ENCODE measurements at regions of chr17 and their contacts with region 1.

Region 1: DNA sequence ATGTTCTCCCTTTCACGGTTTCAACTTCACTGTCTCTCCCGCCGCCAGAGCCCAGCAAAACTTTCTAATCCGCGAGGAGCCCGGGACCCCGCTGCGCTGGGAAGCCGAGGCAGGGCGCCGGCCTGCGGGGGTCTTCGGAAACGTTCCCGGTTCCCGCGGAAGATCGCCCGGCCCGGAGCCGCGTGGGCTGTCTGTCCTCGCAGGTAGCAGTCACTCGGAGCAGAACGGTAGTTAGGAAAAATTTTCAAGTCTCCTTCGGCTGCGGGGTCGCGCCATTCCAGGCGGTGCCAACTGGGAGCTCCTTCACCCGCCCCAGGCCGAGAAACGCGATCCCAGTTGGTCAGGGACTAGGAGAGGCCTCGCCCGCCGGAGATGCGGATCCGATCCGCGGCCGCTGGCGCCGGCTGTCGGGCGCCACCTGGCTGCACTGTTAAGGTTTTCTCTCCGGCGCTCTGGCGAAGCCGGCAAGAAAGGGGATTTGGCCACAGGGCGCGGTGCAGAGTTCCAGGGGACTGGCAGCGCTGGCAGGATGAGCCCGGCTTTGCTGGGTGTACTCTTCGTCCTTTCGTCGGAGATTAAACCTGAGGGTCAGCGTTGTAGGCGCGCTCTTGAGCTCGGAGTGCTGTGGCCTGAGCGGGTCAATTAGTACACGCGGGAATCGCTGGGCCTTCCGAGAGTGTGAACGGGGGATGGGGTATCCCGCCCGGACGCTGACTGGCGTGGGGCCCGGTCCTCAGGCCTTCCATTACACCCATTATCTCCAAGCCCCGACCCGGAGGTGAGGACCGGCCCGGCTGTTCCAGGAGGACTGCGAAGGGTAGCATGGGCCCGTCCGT is 135.4 kb downstream of the KCNJ12 start:
- DNase-seq: peak; percentile 67 to 85
- H3K4me3 ChIP-seq: peak overlapping the region; percentile 40 to 69 (median 53)
- H3K27ac ChIP-seq: no peak overlapping the region
- H3K4me1 ChIP-seq: peaks cover 0 to 6% (median 2%) of the 10 kb centered on the region in 4 experiments; a peak in 3 of 7 replicates
- H3K27me3 ChIP-seq: peaks cover 2 to 20% (median 11%) of the 10 kb centered on the region in 4 experiments
- CTCF ChIP-seq: peak; percentile 55 to 88 (median 68)
- EP300 ChIP-seq: no peak
- POLR2A ChIP-seq: no peak
- RAD21 ChIP-seq: peak; percentile 72 to 82

Region 2: GRCh38 chr17:21275579-21276263 is 235.9 kb before region 1 on chr17:
- CTCF ChIA-PET with region 1: interaction called, 10 read pairs
- POLR2A ChIA-PET with region 1: no interaction called
- DNase-seq: peak in 1 of 2 experiments; percentile 98
- H3K4me3 ChIP-seq: peak overlapping the region; percentile 33 to 68 (median 44)
- H3K27ac ChIP-seq: no peak overlapping the region
- H3K4me1 ChIP-seq: peaks cover 0 to 4% (median 0%) of the 10 kb centered on the region in 4 experiments; a peak in 3 of 7 replicates
- H3K27me3 ChIP-seq: peaks cover 3 to 27% (median 15%) of the 10 kb centered on the region in 4 experiments
- CTCF ChIP-seq: peak in 1 of 3 experiments; percentile 3; a peak in 1 of 4 replicates
- EP300 ChIP-seq: no peak
- POLR2A ChIP-seq: no peak
- RAD21 ChIP-seq: peak in 1 of 2 experiments; percentile 22; a peak in 2 of 4 replicates

Region 3: DNA sequence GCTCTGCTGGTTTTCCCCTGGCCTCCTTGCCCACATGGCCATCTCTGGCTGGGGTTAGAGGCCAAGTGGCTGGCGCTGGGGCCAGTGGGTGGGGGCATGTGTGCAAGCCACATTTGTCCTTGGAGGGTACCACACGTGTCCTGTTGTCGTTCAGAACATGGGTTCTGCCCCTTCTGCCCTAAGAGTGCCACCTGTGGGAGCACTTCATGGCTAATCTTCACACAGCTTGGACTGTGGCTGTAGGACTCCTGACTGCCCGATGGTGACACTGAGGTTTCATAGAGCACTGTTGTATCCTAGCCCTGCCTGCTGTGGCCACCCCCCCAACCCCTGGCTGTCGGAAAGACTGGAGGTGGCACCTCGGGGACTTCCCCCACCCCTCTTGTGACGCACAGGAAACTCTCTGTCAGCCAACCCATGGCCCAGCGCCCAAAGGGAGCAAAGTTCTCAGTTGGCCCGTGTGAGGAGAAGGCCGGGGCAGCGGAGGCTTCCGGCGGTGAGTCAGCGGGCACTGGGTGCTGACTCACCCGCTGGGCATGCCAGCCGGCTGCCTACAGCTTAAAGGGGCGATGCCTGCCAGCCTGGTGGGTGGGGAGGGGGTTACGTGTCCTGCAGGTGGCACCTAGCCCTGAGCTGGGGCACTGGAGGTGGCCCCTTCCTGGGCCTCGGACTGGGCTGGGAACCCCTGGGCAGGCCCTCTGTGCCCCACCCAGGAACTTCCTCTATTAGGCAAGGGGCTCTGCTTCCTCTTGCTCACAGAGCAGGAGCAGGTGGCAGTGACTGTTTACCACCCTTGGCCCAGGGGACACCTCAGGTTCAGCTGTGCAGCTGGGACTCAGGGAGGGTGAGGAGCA is 223.8 kb before region 1 on chr17:
- CTCF ChIA-PET with region 1: interaction called, 17 read pairs
- POLR2A ChIA-PET with region 1: no interaction called
- DNase-seq: no peak
- H3K4me3 ChIP-seq: no peak overlapping the region
- H3K27ac ChIP-seq: no peak overlapping the region
- H3K4me1 ChIP-seq: peaks cover 0 to 19% (median 9%) of the 10 kb centered on the region in 4 experiments; a peak in 6 of 7 replicates
- H3K27me3 ChIP-seq: peaks cover 5 to 13% (median 12%) of the 10 kb centered on the region in 4 experiments
- CTCF ChIP-seq: no peak
- EP300 ChIP-seq: no peak
- POLR2A ChIP-seq: no peak
- RAD21 ChIP-seq: no peak

Region 4: GRCh38 chr17:21418471-21419298 is 92.9 kb before region 1 on chr17:
- CTCF ChIA-PET with region 1: interaction called, 13 read pairs
- POLR2A ChIA-PET with region 1: no interaction called
- DNase-seq: no peak
- H3K4me3 ChIP-seq: no peak overlapping the region
- H3K27ac ChIP-seq: no peak overlapping the region
- H3K4me1 ChIP-seq: no peaks in the 10 kb centered on the region; a peak in 1 of 7 replicates
- H3K27me3 ChIP-seq: no peaks in the 10 kb centered on the region
- CTCF ChIP-seq: no peak
- EP300 ChIP-seq: no peak
- POLR2A ChIP-seq: no peak
- RAD21 ChIP-seq: no peak

Region 5: GRCh38 chr17:21457051-21458026 is 54.2 kb before region 1 on chr17:
- CTCF ChIA-PET with region 1: interaction called, 62 read pairs
- POLR2A ChIA-PET with region 1: no interaction called
- DNase-seq: peak; percentile 58 to 99
- H3K4me3 ChIP-seq: peak overlapping the region in 3 of 4 experiments; percentile 12 to 43 (median 19); a peak in 5 of 8 replicates
- H3K27ac ChIP-seq: no peak overlapping the region
- H3K4me1 ChIP-seq: peaks cover 4 to 11% (median 7%) of the 10 kb centered on the region in 4 experiments
- H3K27me3 ChIP-seq: peaks cover 0 to 16% (median 11%) of the 10 kb centered on the region in 4 experiments; a peak in 6 of 7 replicates
- CTCF ChIP-seq: peak; percentile 70 to 87 (median 83)
- EP300 ChIP-seq: no peak
- POLR2A ChIP-seq: no peak
- RAD21 ChIP-seq: peak; percentile 60 to 76

Region 6: DNA sequence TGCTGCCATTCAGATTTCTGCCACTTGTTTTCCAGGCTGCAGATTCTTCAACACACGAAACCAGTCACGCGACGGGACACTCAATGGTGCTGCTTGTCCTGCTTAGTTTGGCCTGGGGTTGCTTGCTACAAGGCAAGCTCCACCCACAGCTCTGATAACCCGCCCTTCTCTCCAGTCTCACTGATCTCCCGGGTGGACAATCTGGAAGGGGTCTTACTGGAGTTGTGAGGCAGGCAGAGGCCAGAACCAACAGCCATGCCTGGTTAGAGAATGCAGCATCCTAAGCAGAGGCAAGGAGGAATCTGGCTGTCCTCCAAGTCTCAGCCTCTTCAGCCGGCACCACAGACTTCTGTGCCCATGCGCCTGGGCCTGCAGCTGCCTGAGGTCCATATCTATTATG is 16.3 kb before region 1 on chr17:
- CTCF ChIA-PET with region 1: interaction called, 15 read pairs
- POLR2A ChIA-PET with region 1: no interaction called
- DNase-seq: no peak
- H3K4me3 ChIP-seq: no peak overlapping the region
- H3K27ac ChIP-seq: no peak overlapping the region
- H3K4me1 ChIP-seq: peaks cover 0 to 2% (median 0%) of the 10 kb centered on the region in 4 experiments; a peak in 2 of 7 replicates
- H3K27me3 ChIP-seq: no peaks in the 10 kb centered on the region
- CTCF ChIP-seq: no peak
- EP300 ChIP-seq: no peak
- POLR2A ChIP-seq: no peak
- RAD21 ChIP-seq: no peak

Region 7: DNA sequence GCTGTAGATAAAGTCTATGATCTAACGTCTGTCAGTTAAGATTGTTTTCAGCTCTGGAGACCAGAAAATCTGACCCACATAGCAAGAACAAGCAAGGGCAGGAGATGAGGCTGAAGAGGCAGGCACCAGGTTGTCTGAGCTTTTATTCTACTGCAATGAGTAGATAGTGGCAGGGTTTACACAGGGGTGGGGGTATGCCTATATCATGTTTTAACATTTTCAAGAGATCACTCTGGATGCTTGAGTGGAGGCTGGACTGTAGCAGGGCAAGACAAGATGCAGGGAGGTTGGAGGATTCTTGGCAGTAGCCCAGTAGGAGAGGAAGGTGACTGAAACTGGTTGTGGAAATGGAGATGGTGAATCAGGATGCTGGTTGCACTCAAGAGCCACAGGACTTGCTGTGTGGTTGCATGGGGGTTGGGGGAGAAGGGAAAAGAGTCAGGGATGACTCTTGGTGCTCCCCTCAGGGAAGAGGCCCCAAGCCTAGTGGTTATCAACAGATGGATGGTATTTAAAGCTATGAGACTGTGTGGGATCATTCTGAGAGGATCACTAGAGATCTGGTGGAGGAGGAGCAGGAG is 37.6 kb after region 1 on chr17:
- CTCF ChIA-PET with region 1: no interaction called
- POLR2A ChIA-PET with region 1: no interaction called
- DNase-seq: no peak
- H3K4me3 ChIP-seq: no peak overlapping the region
- H3K27ac ChIP-seq: no peak overlapping the region
- H3K4me1 ChIP-seq: no peaks in the 10 kb centered on the region
- H3K27me3 ChIP-seq: no peaks in the 10 kb centered on the region
- CTCF ChIP-seq: no peak
- EP300 ChIP-seq: no peak
- POLR2A ChIP-seq: no peak
- RAD21 ChIP-seq: no peak

Region 8: DNA sequence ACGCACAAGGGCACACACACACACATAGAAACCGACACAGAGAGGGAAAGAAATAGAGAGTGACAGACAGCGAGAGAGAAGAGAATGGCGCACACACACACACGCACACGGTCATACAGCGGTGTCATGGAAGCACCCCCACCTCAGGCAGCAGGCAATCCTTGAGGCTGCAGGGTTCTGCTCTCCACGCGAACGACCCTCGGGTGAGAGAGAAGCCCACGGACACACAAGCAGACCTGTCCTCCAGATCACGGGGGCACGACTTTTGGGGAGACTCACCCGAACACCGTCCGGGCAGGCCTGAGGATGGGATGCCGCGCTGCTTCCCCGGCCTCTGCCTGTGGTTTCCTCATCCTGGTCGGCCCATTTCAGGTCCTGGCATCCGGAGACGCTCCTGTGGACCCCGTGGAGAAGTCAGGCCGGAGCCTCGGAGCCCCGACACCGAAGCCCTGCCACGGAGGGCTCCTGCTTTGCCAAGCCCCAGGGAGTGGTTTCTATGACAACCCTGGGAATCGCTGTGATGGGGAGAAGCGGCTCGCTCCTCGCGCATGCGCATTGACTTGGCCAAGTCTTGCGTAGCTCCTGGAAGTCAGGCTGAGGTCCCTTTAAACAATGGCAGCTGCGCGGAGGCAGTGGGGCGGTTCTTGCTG is 62.5 kb after region 1 on chr17:
- CTCF ChIA-PET with region 1: no interaction called
- POLR2A ChIA-PET with region 1: no interaction called
- DNase-seq: no peak
- H3K4me3 ChIP-seq: no peak overlapping the region
- H3K27ac ChIP-seq: no peak overlapping the region
- H3K4me1 ChIP-seq: no peaks in the 10 kb centered on the region
- H3K27me3 ChIP-seq: no peaks in the 10 kb centered on the region
- CTCF ChIP-seq: no peak
- EP300 ChIP-seq: no peak
- POLR2A ChIP-seq: no peak
- RAD21 ChIP-seq: no peak